ENCODE measurements at regions of chr2 and their contacts with region 1.

Region 1: GRCh38 chr2:9112079-9112721 is 94.4 kb upstream of the ASAP2 start:
- DNase-seq: peak; percentile 98
- H3K4me3 ChIP-seq: peak overlapping the region in 1 of 3 experiments; percentile 10
- H3K27ac ChIP-seq: peak overlapping the region; percentile 85
- H3K4me1 ChIP-seq: peaks cover 39% of the 10 kb centered on the region
- H3K27me3 ChIP-seq: no peaks in the 10 kb centered on the region
- CTCF ChIP-seq: no peak

Region 2: GRCh38 chr2:8693155-8693821 is 418.9 kb before region 1 on chr2:
- CTCF ChIA-PET with region 1: no interaction called
- dilution Hi-C with region 1: no loop called
- in situ Hi-C with region 1: no loop called
- intact Hi-C with region 1: loop called (anchors 1 kb)
- DNase-seq: peak; percentile 28
- H3K4me3 ChIP-seq: peak overlapping the region; percentile 29 to 38 (median 38)
- H3K27ac ChIP-seq: no peak overlapping the region
- H3K4me1 ChIP-seq: peaks cover 11% of the 10 kb centered on the region
- H3K27me3 ChIP-seq: no peaks in the 10 kb centered on the region
- CTCF ChIP-seq: peak; percentile 43 to 82

Region 3: GRCh38 chr2:8872821-8873432 is 239.3 kb before region 1 on chr2:
- CTCF ChIA-PET with region 1: no interaction called
- dilution Hi-C with region 1: no loop called
- in situ Hi-C with region 1: no loop called
- intact Hi-C with region 1: loop called (anchors 1 kb)
- DNase-seq: peak; percentile 37
- H3K4me3 ChIP-seq: no peak overlapping the region
- H3K27ac ChIP-seq: no peak overlapping the region
- H3K4me1 ChIP-seq: no peaks in the 10 kb centered on the region
- H3K27me3 ChIP-seq: no peaks in the 10 kb centered on the region
- CTCF ChIP-seq: peak; percentile 44 to 65

Region 4: GRCh38 chr2:8882094-8882493 is 230.1 kb before region 1 on chr2:
- CTCF ChIA-PET with region 1: no interaction called
- dilution Hi-C with region 1: no loop called
- in situ Hi-C with region 1: no loop called
- intact Hi-C with region 1: loop called (anchors 1 kb)
- DNase-seq: peak; percentile 39
- H3K4me3 ChIP-seq: no peak overlapping the region
- H3K27ac ChIP-seq: no peak overlapping the region
- H3K4me1 ChIP-seq: peaks cover 3% of the 10 kb centered on the region
- H3K27me3 ChIP-seq: no peaks in the 10 kb centered on the region
- CTCF ChIP-seq: peak; percentile 53 to 62

Region 5: GRCh38 chr2:8956774-8957173 is 155.4 kb before region 1 on chr2:
- CTCF ChIA-PET with region 1: interaction called, 11 read pairs
- dilution Hi-C with region 1: no loop called
- in situ Hi-C with region 1: no loop called
- intact Hi-C with region 1: no loop called
- DNase-seq: no peak
- H3K4me3 ChIP-seq: no peak overlapping the region
- H3K27ac ChIP-seq: no peak overlapping the region
- H3K4me1 ChIP-seq: no peaks in the 10 kb centered on the region
- H3K27me3 ChIP-seq: no peaks in the 10 kb centered on the region
- CTCF ChIP-seq: no peak

Region 6: DNA sequence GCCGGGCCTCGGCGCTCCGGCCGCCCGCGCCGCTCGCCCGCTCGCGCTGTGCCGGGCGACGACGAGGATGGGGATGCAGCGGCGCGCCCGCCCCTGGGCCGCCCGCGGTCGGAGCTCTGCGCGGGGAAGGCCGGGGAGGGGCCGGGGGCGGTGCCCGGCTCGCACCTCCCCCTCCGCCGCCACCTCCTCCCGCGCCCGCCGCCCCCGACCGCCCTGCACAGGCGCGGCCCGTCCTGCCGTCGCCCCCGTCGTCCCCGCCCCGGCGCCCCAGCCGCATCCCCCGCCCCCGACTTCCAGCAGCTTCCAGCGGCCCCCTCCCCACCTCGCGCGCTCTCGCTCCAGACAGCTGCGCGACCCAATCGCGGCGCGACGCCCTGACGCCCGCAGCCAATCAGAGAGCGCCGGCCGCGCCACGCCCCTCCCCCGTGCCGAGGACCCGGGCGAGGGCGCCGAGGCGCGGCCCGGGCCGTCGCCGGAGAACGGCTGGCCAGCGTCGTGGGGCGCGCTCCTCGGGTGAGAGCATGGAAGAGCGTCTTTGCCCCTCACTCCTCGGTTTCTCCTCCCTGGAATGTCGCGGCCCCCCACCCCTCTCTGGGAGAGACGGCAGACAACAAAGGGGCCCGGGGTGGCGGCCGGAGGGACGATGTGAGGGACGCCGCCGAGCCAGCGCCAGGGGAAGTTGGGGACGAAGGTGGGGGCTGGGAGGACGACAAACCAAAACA is 108.4 kb before region 1 on chr2 and contains the start of gene MBOAT2:
- CTCF ChIA-PET with region 1: no interaction called
- dilution Hi-C with region 1: no loop called
- in situ Hi-C with region 1: no loop called
- intact Hi-C with region 1: loop called (anchors 1 kb)
- DNase-seq: peak; percentile 84
- H3K4me3 ChIP-seq: peak within 1 kb of the TSS; percentile 82 to 95 (median 85)
- H3K27ac ChIP-seq: peak within 1 kb of the TSS; percentile 74
- H3K4me1 ChIP-seq: peaks cover 40% of the 10 kb centered on the region
- H3K27me3 ChIP-seq: no peaks in the 10 kb centered on the region
- CTCF ChIP-seq: no peak
- total RNA-seq, gene MBOAT2: 14.8 to 103 TPM